A673 (cell line): ENCODE measurements at regions of chr22 and their contacts with region 1.

Region 1: GRCh38 chr22:37933711-37934376 is 19.6 kb downstream of the C22orf23 start:
- DNase-seq: peak; percentile 98
- H3K4me3 ChIP-seq: no peak overlapping the region
- H3K27ac ChIP-seq: peak overlapping the region; percentile 36
- H3K4me1 ChIP-seq: peaks cover 7% of the 10 kb centered on the region
- H3K27me3 ChIP-seq: no peaks in the 10 kb centered on the region
- CTCF ChIP-seq: peak; percentile 99

Region 2: DNA sequence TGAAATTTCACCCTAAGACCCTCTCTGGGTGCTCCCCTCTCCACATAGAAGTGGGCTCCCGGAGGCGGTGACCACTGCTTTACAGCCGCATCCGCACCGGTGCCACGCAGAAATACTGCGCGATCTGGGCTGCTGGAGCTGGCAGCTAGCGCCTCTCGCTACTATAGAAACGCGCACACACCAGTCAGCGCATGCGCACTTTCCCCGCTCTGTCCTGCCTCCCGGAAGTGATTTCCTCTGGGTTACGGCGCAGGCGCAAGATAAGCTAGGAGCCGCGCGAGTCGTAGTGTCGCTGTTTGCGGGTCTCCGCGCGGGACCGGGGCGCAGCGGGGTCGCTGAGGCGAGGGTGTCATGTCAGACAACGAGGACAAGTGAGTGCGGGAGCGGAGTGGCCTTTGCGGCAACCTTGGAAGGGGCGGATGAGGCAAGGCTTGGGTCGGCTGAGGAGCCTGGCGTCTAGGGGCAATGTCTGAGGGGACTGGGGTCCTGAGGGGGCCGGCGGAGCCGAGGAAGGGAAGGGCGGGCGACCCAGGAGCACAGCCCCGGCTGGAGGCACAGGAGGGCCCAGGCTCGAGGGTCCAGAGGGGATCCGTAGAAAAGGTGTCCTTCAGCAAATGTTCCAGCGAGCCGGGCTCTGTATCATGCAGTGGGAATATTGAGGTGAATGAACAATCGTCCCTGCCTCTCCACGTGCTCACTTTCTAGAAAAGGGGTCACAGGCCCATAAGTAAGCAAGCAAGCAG is 19.8 kb after region 1 on chr22 and contains the starts of genes C22orf23 and POLR2F:
- CTCF ChIA-PET with region 1: no interaction called
- POLR2A ChIA-PET with region 1: no interaction called
- intact Hi-C with region 1: loop called (anchors 1 kb)
- DNase-seq: peak; percentile 96
- H3K4me3 ChIP-seq: peak within 1 kb of the TSS; percentile 73
- H3K27ac ChIP-seq: peak within 1 kb of the TSS; percentile 77
- H3K4me1 ChIP-seq: peaks cover 8% of the 10 kb centered on the region
- H3K27me3 ChIP-seq: no peaks in the 10 kb centered on the region
- CTCF ChIP-seq: no peak
- total RNA-seq, gene C22orf23: 0.64 and 0.66 TPM in 2 replicates
- total RNA-seq, gene POLR2F: 150 and 162 TPM in 2 replicates

Region 3: DNA sequence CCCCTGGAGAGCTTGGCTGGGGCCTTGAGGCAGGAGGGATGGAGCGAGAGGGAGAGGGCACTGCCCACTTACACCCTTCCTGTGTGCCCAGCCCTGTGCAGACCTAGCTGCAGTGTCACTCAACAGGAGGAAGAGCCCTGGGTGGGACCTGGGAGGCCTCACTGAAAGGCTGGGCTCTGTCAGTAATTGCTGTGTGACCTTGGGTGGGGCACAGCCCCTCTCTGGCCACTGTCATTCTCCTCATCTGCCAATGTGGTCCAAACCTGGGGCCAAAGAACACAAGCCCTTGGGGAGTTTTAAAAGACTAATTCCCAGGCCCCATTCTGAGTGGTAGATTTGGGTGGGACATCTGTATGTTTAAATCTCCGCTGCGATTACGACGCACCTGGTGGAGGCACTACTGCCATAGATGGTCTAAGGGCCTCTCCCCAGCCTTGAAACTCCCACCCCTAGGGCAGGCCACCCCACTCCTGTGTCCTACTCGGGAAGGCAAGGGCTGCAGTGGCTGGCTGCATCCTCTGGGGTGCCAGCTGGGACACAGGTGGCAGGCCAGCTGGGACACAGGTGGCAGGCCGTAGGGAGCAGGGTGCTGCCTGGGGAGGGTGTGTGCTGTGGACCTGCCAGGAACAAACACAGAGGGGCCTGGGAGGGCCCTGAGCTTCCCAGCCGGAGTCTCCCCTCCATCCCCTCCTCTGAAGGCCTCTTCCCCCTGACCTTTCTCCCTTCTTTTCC is 62.8 kb after region 1 on chr22:
- CTCF ChIA-PET with region 1: no interaction called
- POLR2A ChIA-PET with region 1: no interaction called
- intact Hi-C with region 1: no loop called
- DNase-seq: no peak
- H3K4me3 ChIP-seq: no peak overlapping the region
- H3K27ac ChIP-seq: no peak overlapping the region
- H3K4me1 ChIP-seq: peaks cover 19% of the 10 kb centered on the region
- H3K27me3 ChIP-seq: no peaks in the 10 kb centered on the region
- CTCF ChIP-seq: no peak